CD8-positive, alpha-beta T cell (primary cell): ENCODE measurements at regions of chr4 and their contacts with region 1.

Region 1: GRCh38 chr4:7802093-7802726 is 137.5 kb downstream of the AFAP1 start:
- DNase-seq: peak; percentile 59 to 81 (median 77)
- ATAC-seq: peak; percentile 96
- H3K4me3 ChIP-seq: no peak overlapping the region
- H3K4me3 Mint-ChIP-seq: no peak overlapping the region
- H3K27ac ChIP-seq: no peak overlapping the region
- H3K27ac Mint-ChIP-seq: no peak overlapping the region
- H3K4me1 ChIP-seq: no peaks in the 10 kb centered on the region
- H3K4me1 Mint-ChIP-seq: peaks cover 9% of the 10 kb centered on the region
- H3K27me3 ChIP-seq: no peaks in the 10 kb centered on the region
- H3K27me3 Mint-ChIP-seq: no peaks in the 10 kb centered on the region
- CTCF ChIP-seq: peak; percentile 89

Region 2: DNA sequence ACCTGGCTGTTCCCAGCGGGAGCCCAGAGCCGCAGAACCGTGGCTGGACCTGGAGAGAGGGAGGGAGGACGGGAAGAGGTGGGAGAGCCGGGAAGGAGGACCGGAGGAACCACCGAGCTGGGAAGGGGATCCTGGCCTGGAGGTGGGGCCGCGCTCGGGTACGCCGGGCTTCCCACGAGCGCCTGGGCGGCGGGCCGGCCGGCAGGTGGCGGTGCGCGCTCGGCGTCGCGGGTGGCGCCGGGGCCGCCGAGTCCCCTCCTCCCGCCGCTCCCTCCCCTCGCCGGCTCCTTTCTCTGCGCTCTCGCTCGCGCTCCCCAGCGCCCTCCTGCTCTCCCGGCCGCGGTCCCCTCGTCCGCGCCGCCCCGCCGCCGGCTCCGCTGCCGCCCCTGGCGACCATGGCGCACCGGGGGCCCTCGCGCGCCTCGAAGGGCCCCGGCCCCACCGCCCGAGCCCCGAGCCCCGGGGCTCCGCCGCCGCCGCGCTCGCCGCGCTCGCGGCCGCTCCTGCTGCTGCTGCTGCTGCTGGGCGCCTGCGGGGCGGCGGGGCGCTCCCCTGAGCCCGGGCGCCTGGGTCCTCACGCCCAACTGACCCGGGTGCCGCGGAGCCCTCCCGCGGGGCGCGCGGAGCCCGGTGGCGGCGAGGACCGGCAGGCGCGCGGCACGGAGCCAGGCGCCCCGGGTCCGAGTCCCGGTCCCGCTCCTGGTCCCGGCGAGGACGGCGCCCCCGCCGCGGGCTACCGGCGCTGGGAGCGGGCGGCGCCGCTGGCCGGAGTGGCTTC is 609.8 kb before region 1 on chr4 and contains the start of gene SORCS2:
- CTCF ChIA-PET with region 1: interaction called, 3 read pairs
- POLR2A ChIA-PET with region 1: no interaction called
- intact Hi-C with region 1: loop called in 1 of 2 experiments (anchors 2 kb)
- DNase-seq: peak in 5 of 9 experiments; percentile 7 to 67 (median 26)
- ATAC-seq: peak; percentile 52
- H3K4me3 ChIP-seq: no peak within 1 kb of the TSS
- H3K4me3 Mint-ChIP-seq: peak within 1 kb of the TSS; percentile 58
- H3K27ac ChIP-seq: no peak within 1 kb of the TSS
- H3K27ac Mint-ChIP-seq: no peak within 1 kb of the TSS
- H3K4me1 ChIP-seq: peaks cover 5% of the 10 kb centered on the region
- H3K4me1 Mint-ChIP-seq: no peaks in the 10 kb centered on the region
- H3K27me3 ChIP-seq: peaks cover 9 to 10% of the 10 kb centered on the region in 2 experiments
- H3K27me3 Mint-ChIP-seq: peaks cover 59% of the 10 kb centered on the region
- CTCF ChIP-seq: no peak
- total RNA-seq, gene SORCS2: not detected

Region 3: GRCh38 chr4:7761720-7762119 is 40.5 kb before region 1 on chr4:
- CTCF ChIA-PET with region 1: interaction called, 11 read pairs
- POLR2A ChIA-PET with region 1: no interaction called
- intact Hi-C with region 1: loop called (anchors 1 to 2 kb)
- DNase-seq: peak; percentile 24 to 73 (median 55)
- ATAC-seq: peak; percentile 64
- H3K4me3 ChIP-seq: no peak overlapping the region
- H3K4me3 Mint-ChIP-seq: peak overlapping the region; percentile 8
- H3K27ac ChIP-seq: peak overlapping the region in 1 of 2 experiments; percentile 31
- H3K27ac Mint-ChIP-seq: peak overlapping the region; percentile 84
- H3K4me1 ChIP-seq: peaks cover 35% of the 10 kb centered on the region
- H3K4me1 Mint-ChIP-seq: peaks cover 32% of the 10 kb centered on the region
- H3K27me3 ChIP-seq: no peaks in the 10 kb centered on the region
- H3K27me3 Mint-ChIP-seq: no peaks in the 10 kb centered on the region
- CTCF ChIP-seq: peak; percentile 51

Region 4: DNA sequence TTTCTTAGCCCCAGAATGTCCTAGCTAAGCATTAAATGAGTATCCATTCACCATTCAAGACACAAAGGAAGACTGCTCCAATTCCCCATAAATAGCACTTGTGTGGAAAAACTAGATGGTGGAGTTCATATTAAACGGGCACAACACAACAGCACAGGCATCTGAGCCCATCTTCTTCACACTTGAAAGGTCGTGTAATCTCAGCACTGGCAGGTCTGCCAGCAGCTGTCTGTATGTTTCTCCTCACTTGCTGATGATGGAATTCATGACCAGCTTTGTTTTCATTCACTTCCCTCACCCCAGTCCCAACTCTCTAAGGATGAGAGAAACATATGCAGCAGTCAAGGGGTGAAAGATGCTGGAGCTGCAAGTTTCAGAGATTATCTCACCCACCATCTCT is 11.2 kb before region 1 on chr4:
- CTCF ChIA-PET with region 1: interaction called, 10 read pairs
- POLR2A ChIA-PET with region 1: no interaction called
- intact Hi-C with region 1: no loop called
- DNase-seq: no peak
- ATAC-seq: no peak
- H3K4me3 ChIP-seq: no peak overlapping the region
- H3K4me3 Mint-ChIP-seq: no peak overlapping the region
- H3K27ac ChIP-seq: no peak overlapping the region
- H3K27ac Mint-ChIP-seq: no peak overlapping the region
- H3K4me1 ChIP-seq: no peaks in the 10 kb centered on the region
- H3K4me1 Mint-ChIP-seq: no peaks in the 10 kb centered on the region
- H3K27me3 ChIP-seq: no peaks in the 10 kb centered on the region
- H3K27me3 Mint-ChIP-seq: no peaks in the 10 kb centered on the region
- CTCF ChIP-seq: no peak

Region 5: DNA sequence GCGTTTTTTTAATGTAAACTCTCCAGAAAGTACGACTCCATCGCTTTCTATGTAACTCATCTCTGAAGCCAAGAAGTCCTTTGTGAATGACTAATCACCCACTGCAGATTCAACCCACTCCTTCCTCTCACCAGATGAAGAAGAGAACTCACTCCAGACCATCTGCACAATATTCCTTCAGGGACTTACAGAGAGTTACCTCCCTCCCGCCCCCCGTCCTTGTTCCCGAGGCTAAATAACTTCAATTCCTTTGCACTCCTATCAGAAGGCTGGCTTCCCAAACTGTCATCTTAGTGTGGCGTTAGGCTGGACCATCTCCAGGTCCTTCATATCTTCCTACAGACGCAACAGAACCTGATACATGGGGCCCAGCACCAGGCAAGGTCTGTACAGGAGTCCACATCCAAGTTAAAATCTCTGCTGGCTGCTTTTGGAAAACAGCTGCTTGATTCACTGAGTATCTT is 55.1 kb after region 1 on chr4:
- CTCF ChIA-PET with region 1: interaction called, 5 read pairs
- POLR2A ChIA-PET with region 1: no interaction called
- intact Hi-C with region 1: loop called in 1 of 2 experiments (anchors 2 kb)
- DNase-seq: no peak
- ATAC-seq: no peak
- H3K4me3 ChIP-seq: no peak overlapping the region
- H3K4me3 Mint-ChIP-seq: no peak overlapping the region
- H3K27ac ChIP-seq: no peak overlapping the region
- H3K27ac Mint-ChIP-seq: no peak overlapping the region
- H3K4me1 ChIP-seq: peaks cover 43% of the 10 kb centered on the region
- H3K4me1 Mint-ChIP-seq: peaks cover 51% of the 10 kb centered on the region
- H3K27me3 ChIP-seq: no peaks in the 10 kb centered on the region
- H3K27me3 Mint-ChIP-seq: no peaks in the 10 kb centered on the region
- CTCF ChIP-seq: no peak

Region 6: GRCh38 chr4:7987148-7987989 is 185.2 kb after region 1 on chr4:
- CTCF ChIA-PET with region 1: interaction called, 210 read pairs
- POLR2A ChIA-PET with region 1: interaction called, 6 read pairs
- intact Hi-C with region 1: loop called in 1 of 2 experiments (anchors 1 kb)
- DNase-seq: peak; percentile 56 to 84 (median 76)
- ATAC-seq: peak; percentile 77
- H3K4me3 ChIP-seq: no peak overlapping the region
- H3K4me3 Mint-ChIP-seq: no peak overlapping the region
- H3K27ac ChIP-seq: no peak overlapping the region
- H3K27ac Mint-ChIP-seq: no peak overlapping the region
- H3K4me1 ChIP-seq: peaks cover 5% of the 10 kb centered on the region
- H3K4me1 Mint-ChIP-seq: peaks cover 6% of the 10 kb centered on the region
- H3K27me3 ChIP-seq: no peaks in the 10 kb centered on the region
- H3K27me3 Mint-ChIP-seq: peaks cover 2% of the 10 kb centered on the region
- CTCF ChIP-seq: peak; percentile 76

Region 7: DNA sequence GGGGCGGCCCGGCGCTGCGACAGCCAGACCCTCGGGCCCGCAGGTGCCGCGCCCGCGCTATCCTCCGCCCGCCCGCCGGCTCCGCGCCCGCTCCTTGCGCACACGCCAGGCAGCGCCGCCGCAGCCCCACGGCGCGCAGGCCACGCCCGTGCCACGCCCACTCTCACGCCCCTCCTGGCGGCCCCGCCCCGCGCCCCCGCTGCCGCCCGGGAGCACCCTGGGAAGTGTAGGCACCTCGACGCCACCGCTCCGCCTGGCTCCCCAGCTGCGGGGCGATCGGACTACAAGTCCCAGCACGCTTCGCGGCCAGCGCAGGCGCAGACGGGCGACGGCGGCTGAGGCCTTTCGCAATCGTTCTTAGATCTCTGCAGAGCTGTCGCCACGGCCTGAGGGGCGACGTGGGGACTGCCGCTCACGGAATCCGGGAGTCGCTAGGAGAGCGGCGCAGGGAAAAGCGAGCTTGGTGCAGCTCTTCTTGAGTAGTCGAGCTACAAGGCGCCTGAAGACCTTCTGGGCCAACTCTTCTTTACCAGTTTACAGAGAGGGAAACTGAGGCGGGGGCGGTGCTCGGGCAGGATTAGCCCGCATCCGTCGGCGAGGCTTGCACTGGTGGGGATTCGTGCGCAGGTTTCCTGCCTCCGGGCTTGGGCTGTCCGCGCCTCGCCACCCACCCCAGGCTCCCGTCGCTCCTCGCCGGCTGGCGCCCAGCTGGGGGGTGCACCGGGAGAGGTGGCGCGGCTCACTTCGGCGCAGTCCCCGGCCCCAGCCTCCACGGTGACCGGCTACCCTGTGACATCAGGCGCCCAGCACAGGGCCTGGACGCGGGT is 356.7 kb after region 1 on chr4 and contains the start of gene ABLIM2:
- CTCF ChIA-PET with region 1: no interaction called
- POLR2A ChIA-PET with region 1: no interaction called
- intact Hi-C with region 1: no loop called
- DNase-seq: peak; percentile 97 to 100 (median 99)
- ATAC-seq: peak; percentile 99
- H3K4me3 ChIP-seq: peak within 1 kb of the TSS; percentile 90 to 97
- H3K4me3 Mint-ChIP-seq: peak within 1 kb of the TSS; percentile 89
- H3K27ac ChIP-seq: peak within 1 kb of the TSS; percentile 48 to 56
- H3K27ac Mint-ChIP-seq: peak within 1 kb of the TSS; percentile 72
- H3K4me1 ChIP-seq: peaks cover 18% of the 10 kb centered on the region
- H3K4me1 Mint-ChIP-seq: peaks cover 16% of the 10 kb centered on the region
- H3K27me3 ChIP-seq: peaks cover 0 to 6% of the 10 kb centered on the region in 2 experiments
- H3K27me3 Mint-ChIP-seq: no peaks in the 10 kb centered on the region
- CTCF ChIP-seq: no peak
- total RNA-seq, gene ABLIM2: 1.2 to 1.6 TPM